Activated T-helper 2 cell treated with anti-CD3 and anti-CD28 coated beads, Interferon-gamma antibody, Interleukin-2, Interleukin-4, amounts not matched to agents 10 μg/mL and 5 μg/mL and 100 μg/mL, durations not matched to agents 14 hours and 24 hours and 36 hours (primary cell): ENCODE measurements at regions of chr14 and their contacts with region 1.

Region 1: GRCh38 chr14:92729626-92730358 is 18.6 kb downstream of the LGMN start:
- DNase-seq: no peak
- H3K4me3 Mint-ChIP-seq: no peak overlapping the region
- H3K27ac Mint-ChIP-seq: no peak overlapping the region
- H3K4me1 Mint-ChIP-seq: peaks cover 24% of the 10 kb centered on the region
- H3K27me3 Mint-ChIP-seq: peaks cover 60% of the 10 kb centered on the region

Region 2: DNA sequence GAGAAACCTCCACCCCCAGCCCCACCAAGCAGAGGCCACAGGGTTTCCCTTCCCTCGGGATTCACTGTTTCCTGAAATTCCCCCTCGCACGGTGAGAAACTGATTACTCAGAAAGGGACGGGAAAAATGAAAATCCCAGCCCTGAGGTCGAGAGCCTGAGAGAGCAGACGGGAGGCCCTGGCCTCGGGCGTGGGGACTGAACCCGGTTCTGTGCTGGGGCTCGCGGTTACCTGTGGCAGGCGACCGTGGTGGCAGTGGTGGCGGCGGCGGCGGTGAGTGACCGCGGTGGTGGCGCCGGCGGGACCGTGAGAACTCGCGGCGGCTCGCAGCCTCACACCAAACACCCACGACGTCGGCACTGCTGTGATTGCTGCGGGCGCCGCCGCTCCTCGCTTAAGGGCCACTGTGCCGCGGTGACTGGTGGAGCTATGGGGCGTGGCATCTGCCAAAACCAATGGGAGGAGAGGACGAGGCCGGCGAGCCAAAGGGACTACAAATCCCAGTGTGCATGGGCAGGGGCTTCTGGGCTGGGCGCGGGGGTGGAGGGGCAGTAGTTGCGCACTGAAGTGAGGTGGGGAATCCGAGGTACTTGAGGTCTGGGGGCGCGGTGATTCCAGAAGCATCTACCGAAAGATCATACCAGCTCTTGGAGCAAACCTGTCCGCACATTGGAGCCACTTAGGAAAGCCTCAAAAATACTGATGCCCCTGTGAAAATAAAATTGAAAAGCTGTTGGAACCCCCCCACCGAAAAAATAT is 18.6 kb after region 1 on chr14 and contains the start of gene LGMN:
- intact Hi-C with region 1: loop called (anchors 2 kb)
- DNase-seq: peak; percentile 60
- H3K4me3 Mint-ChIP-seq: peak within 1 kb of the TSS; percentile 59
- H3K27ac Mint-ChIP-seq: no peak within 1 kb of the TSS
- H3K4me1 Mint-ChIP-seq: peaks cover 25% of the 10 kb centered on the region
- H3K27me3 Mint-ChIP-seq: peaks cover 76% of the 10 kb centered on the region
- total RNA-seq, gene LGMN: 1.1 and 1.3 TPM in 2 replicates